Heart right ventricle (tissue), 16 donors: ENCODE measurements at regions of chr16 and their contacts with region 1.

Region 1: DNA sequence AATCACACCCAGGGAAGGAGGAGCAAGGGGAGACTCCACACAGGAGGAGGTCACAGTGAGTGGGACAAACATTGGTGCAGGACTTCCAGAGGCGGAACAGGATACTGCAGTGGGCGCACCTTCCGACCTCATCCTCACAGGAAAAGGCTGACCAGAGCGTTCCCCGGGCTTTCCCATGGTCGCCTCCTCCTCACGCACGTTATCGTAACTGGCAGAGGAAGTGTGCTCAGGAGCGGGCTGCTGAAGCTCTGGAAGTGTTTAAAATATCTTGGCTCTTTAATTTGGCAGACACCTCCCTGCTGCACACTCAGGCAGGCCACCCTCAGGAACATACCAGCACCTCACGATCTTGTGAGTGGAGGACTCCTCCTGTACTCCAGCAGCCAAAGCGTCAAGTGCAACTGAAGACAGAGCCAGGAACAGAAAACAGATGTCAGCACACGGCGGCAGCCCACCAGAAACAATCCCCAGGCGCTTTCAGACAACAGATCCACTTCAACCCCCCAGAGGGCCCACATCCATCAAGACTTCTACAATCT is 17.5 kb downstream of the FANCA start:
- DNase-seq: peak; percentile 19 to 36
- ATAC-seq: peak; percentile 65 to 90 (median 86)
- H3K4me3 ChIP-seq: peak overlapping the region in 5 of 10 donors; percentile 0 to 26 (median 22)
- H3K27ac ChIP-seq: peak overlapping the region in 6 of 10 donors; percentile 39 to 72 (median 52)
- H3K4me1 ChIP-seq: peaks cover 0 to 14% (median 9%) of the 10 kb centered on the region in 9 donors
- H3K27me3 ChIP-seq: no peaks in the 10 kb centered on the region
- CTCF ChIP-seq: no peak

Region 2: DNA sequence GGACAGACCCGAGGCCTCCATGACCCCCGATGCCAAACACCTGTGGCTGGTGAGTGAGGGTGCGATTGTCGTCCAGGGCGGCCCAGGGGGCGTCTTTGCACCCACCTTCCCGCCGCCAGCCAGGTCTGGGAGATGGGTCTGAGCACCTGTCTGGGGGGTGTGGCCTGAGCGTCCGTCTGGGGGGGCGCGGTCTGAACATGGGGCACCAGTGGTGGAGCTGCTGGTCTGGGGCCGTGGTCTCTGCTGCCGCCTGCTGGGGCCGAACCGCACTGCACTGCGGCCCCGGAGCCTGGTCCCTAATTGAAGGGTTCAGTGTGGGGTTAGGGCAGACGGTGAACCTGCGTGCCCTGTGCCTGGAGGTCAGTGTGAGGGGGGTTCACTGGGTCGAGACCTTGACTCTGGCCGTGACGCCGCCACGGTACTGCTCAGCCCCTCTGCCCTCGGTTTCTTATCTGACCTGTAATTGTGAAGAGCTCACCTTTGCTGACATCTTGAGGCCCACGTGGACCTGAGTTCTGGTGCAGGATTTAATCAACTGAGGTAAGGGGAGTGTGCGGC is 61.9 kb after region 1 on chr16:
- intact Hi-C with region 1: loop called in 2 of 10 experiments (anchors 5 to 10 kb)
- DNase-seq: peak; percentile 49 to 71
- ATAC-seq: peak; percentile 64 to 81 (median 78)
- H3K4me3 ChIP-seq: no peak overlapping the region
- H3K27ac ChIP-seq: no peak overlapping the region
- H3K4me1 ChIP-seq: peaks cover 0 to 32% (median 21%) of the 10 kb centered on the region in 9 donors
- H3K27me3 ChIP-seq: no peaks in the 10 kb centered on the region
- CTCF ChIP-seq: peak; percentile 91 to 98 (median 96)